ENCODE measurements at regions of chr2 and their contacts with region 1.

Region 1: DNA sequence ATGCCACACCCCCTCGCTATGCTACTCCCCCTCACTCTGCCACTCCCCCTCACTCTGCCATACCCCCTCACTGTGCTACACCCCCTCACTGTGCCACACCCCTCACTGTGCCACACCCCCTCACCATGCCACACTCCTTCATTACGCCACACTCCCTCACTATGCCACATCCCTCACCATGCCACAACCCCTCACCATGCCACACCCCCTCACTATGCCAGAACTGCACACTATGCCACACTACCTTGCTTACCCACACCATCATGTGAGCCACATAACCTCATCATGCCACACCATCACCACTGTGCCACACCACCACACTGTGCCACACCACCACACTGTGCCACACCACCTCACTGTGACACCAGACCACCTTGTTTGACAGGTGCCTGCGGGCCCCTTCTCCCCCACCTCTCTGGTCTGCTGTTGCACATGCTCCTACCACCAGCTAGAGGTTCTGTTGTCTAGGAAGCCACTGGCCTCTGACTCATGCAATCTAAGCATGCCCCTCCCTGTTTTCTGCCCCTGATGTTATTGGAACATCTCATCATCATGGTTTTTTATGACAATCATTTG is 22.0 kb downstream of the MARCHF4 start:
- DNase-seq: peak; percentile 56
- H3K4me3 Mint-ChIP-seq: no peak overlapping the region
- H3K27ac Mint-ChIP-seq: peak overlapping the region; percentile 23
- H3K4me1 Mint-ChIP-seq: peaks cover 80% of the 10 kb centered on the region
- H3K27me3 Mint-ChIP-seq: no peaks in the 10 kb centered on the region

Region 2: DNA sequence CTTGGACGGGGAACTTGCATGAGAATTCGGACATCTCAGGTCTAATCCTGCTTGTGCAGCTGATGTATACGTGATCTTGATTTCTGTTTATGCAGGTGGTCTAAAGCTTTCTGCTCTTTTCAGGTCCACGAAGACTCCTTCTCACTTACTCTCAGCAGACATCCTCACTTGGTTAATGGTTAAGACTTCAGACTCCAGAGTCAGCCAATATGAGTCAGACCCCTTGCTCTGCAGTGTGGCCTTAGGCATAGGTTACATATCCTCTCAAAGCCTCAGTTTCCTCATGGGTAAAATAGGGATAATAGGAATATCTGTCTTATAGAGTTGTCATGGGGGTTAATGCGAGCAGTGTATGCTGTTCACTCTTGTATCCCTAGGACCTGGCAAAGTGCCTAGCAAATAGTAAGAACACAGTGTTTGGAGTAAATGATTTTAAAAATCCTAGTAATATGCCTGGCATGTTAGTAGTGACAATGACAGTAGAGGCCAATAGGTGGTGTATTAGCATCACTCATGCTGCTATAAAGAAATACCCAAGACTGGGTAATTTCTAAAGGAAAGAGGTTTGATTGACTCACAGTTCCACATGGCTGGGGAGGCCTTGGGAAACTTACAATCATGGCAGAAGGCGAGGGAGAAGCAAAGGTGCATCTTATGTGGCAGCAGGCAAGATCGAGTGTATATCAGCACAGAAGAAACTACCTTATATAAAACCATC is 198.8 kb before region 1 on chr2:
- CTCF ChIA-PET with region 1: interaction called, 3 read pairs
- intact Hi-C with region 1: loop called (anchors 1 kb)
- DNase-seq: no peak
- H3K4me3 Mint-ChIP-seq: no peak overlapping the region
- H3K27ac Mint-ChIP-seq: no peak overlapping the region
- H3K4me1 Mint-ChIP-seq: peaks cover 25% of the 10 kb centered on the region
- H3K27me3 Mint-ChIP-seq: no peaks in the 10 kb centered on the region

Region 3: DNA sequence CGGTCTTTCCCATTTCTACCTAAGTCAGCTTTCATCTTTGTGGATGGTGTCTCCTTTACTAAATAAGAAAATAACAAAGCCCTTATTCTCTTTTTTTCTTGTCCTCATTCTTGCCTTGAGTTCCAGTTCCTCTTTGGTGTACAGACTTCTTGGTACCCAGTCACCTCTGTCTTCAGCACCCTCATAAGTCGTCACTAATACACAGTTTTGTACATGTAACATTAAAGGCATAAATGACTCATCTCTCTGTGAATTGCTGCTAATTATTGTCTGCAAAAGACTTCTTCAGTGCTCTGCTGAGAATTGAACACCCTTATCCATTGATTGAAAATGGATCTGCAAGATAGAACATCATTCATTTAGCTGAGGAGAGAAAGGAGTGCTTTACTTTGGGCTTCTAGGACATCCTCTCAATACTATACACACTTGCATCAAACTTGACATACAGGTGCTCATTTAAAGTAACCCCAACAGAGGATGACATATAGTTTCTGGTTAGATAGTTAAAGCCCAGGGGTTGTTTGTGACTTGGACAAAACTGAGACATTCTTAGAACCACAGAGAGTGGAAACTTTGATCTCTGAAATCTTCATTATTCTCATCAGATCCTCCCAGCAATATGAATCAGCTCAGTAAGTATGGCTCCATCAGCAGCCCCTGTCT is 144.1 kb before region 1 on chr2:
- CTCF ChIA-PET with region 1: no interaction called
- intact Hi-C with region 1: loop called (anchors 1 kb)
- DNase-seq: no peak
- H3K4me3 Mint-ChIP-seq: no peak overlapping the region
- H3K27ac Mint-ChIP-seq: peak overlapping the region; percentile 93
- H3K4me1 Mint-ChIP-seq: peaks cover 77% of the 10 kb centered on the region
- H3K27me3 Mint-ChIP-seq: no peaks in the 10 kb centered on the region

Region 4: GRCh38 chr2:216371756-216372702 is 21.7 kb after region 1 on chr2 and contains the start of gene MARCHF4:
- CTCF ChIA-PET with region 1: interaction called, 4 read pairs
- intact Hi-C with region 1: loop called (anchors 1 kb)
- DNase-seq: peak; percentile 76
- H3K4me3 Mint-ChIP-seq: no peak within 1 kb of the TSS
- H3K27ac Mint-ChIP-seq: no peak within 1 kb of the TSS
- H3K4me1 Mint-ChIP-seq: peaks cover 15% of the 10 kb centered on the region
- H3K27me3 Mint-ChIP-seq: peaks cover 34% of the 10 kb centered on the region
- total RNA-seq, gene MARCHF4: not detected

Region 5: DNA sequence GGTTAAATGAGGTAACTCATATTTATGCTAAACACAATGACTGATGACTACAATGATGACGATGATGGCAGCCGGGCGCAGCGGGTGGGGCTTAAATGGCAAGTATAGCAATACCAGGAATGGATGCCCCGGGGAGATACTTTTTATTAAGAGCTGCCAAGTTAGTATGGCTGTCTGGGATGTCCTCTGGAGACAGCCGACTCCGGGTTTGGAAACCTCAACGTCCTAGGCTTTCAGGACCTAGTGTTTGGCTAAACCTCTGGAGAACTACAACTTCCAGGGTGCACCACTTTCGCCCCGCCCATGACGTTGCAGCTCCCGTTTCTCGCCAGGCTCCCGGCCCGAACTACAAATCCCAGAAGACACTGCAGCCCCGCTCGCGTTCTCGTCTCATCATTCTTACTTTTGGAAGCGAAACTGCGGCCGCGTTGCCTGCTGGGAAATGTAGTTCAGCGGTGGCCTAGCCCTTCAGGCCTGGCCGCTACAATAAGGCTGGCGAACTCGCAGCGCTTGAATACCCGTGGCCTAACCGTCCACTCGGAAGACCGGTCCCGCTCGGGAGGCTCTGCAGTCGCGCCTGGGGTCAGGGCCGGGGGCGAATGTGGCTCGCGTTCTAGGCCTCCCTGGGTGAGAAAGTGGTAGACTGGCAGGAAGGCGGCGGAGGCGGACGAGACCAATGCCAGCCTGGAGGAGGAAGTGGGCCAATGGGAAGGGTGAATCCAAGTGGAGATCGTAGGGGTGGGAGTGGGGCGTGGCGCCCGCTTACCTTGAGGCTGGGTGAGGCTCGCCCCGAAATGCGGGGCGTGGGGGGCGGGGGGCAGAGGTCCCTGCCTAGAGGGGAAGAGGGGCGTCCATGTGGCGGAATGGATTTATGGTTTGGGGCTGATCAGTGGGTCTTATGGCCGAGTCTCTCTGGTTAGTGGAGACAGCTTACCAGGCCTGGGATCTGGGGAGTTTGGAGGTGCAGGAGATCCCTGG is 62.0 kb after region 1 on chr2 and contains the start of gene SMARCAL1:
- CTCF ChIA-PET with region 1: no interaction called
- intact Hi-C with region 1: loop called (anchors 1 kb)
- DNase-seq: peak; percentile 100
- H3K4me3 Mint-ChIP-seq: peak within 1 kb of the TSS; percentile 92
- H3K27ac Mint-ChIP-seq: peak within 1 kb of the TSS; percentile 90
- H3K4me1 Mint-ChIP-seq: peaks cover 6% of the 10 kb centered on the region
- H3K27me3 Mint-ChIP-seq: no peaks in the 10 kb centered on the region
- total RNA-seq, gene SMARCAL1: 17.0 to 18.2 TPM

Region 6: DNA sequence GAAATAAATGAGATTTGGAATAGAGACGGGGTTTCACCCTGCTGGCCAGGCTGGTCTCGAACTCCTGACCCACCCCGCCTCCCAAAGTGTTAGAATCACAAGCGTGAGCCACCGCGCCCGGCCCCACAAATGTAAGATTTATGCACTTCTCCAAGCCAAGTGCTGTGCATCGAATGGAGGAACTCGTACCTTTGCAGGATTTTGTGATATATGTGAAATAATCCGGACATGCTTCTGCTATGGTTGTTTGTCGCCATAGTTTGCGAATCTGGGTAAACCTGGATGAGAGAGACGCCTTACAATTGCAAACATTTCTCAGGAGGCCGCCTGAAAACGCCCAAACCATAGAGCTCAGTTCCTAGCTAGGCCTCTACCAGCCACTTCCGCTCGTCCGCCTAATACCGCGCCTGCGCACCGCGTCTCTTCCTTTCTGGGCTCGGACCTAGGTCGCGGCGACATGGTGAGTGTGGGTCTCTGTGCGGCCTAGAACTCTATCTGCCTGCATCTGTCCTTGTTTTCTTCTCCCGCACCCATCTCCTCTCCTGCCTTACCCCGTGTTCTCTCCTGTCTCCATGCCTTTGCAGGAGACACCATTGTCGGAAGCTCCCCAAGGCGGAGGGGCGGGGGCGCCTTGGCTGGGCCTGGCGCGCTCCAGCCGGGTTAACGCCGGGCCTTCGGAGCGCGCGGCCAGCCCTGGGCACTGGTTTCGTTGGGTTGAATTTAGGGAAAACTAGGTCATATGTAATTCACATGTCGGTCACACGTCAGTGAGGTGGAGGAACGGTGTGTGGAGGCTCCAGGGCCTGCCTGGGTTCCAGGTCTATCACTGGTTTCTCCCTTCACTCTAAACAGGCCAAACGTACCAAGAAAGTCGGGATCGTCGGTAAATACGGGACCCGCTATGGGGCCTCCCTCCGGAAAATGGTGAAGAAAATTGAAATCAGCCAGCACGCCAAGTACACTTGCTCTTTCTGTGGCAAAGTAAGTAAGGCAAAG is 148.4 kb after region 1 on chr2 and contains the start of gene RPL37A:
- CTCF ChIA-PET with region 1: no interaction called
- intact Hi-C with region 1: loop called (anchors 2 kb)
- DNase-seq: peak; percentile 93
- H3K4me3 Mint-ChIP-seq: peak within 1 kb of the TSS; percentile 94
- H3K27ac Mint-ChIP-seq: peak within 1 kb of the TSS; percentile 94
- H3K4me1 Mint-ChIP-seq: peaks cover 51% of the 10 kb centered on the region
- H3K27me3 Mint-ChIP-seq: no peaks in the 10 kb centered on the region
- total RNA-seq, gene RPL37A: 4,869 to 4,871 TPM

Region 7: DNA sequence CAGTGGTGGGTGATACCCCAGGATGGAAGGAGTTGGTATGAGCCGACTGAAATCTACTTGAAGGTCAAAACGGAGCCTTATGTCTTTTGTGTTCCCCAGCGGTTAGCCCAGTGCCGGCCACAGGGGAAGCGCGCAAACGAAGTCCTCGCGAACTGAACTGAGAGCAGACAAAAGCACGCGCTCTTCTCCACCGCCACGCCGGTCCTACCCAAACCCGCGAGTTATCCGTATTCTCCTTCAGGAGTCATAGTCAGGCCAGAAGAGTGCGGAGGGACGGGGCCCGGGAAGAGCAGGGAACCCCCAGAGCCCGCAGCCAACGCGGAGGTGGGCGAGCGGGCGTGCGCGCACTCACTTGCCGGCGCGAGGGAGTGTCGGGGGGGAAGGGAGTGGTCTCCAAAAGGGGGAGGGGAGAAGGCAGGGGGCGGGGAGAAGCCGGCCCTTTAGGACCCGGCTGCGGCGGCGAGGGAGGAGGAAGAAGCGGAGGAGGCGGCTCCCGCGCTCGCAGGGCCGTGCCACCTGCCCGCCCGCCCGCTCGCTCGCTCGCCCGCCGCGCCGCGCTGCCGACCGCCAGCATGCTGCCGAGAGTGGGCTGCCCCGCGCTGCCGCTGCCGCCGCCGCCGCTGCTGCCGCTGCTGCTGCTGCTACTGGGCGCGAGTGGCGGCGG is 282.8 kb after region 1 on chr2 and contains the start of gene IGFBP2:
- CTCF ChIA-PET with region 1: no interaction called
- intact Hi-C with region 1: no loop called
- DNase-seq: peak; percentile 27
- H3K4me3 Mint-ChIP-seq: peak within 1 kb of the TSS; percentile 75
- H3K27ac Mint-ChIP-seq: no peak within 1 kb of the TSS
- H3K4me1 Mint-ChIP-seq: peaks cover 27% of the 10 kb centered on the region
- H3K27me3 Mint-ChIP-seq: peaks cover 60% of the 10 kb centered on the region
- total RNA-seq, gene IGFBP2: 2.4 to 2.7 TPM